Heart right ventricle (tissue), 16 donors: ENCODE measurements at regions of chr17 and their contacts with region 1.

Region 1: DNA sequence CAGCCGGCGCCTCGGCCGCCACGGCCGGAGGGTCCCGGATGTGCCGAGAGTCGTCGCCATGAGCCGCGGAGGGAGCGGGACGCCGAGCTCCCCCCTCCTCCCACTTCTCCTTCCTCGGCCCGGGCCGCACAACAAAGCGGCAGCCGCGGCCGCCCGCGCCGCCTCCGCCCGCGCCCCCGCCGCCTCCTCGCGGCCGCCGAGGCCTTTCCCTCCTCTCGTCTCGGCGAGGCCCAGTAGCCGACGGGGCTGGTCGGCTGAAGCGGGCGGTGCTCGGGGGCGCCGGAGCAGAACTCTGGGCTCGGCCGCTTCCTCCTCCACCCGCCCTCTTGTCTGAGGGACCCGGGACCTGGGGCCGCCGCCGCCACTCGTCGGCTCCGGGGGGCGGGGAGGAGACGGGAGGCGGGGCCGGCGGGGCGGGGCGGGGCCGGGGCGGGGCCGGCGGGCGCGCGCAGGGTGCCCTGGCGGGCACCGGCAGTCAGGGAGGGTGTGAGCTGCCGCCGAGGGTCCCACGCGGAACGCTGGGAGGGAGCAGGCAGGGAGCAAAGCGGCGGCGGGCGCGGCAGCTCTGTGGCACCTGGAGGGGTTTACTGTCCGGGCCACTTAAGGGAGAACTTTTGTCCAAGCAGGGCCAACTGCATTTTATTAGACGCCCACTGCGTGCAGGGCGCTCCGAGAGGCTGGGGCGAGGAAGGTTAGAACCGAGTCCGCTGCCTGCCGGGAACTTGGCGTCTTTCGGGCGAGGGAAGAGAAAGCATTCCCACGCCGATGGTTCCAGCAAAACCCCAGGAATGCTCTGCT is at the start of gene SMURF2:
- DNase-seq: peak; percentile 80 to 82
- ATAC-seq: peak; percentile 88 to 96 (median 92)
- H3K4me3 ChIP-seq: peak within 1 kb of the TSS; percentile 69 to 84 (median 78)
- H3K27ac ChIP-seq: peak within 1 kb of the TSS; percentile 83 to 98 (median 94)
- H3K4me1 ChIP-seq: peaks cover 0 to 42% (median 30%) of the 10 kb centered on the region in 9 donors
- H3K27me3 ChIP-seq: no peaks in the 10 kb centered on the region
- CTCF ChIP-seq: peak in 1 of 9 donors; percentile 24
- total RNA-seq, gene SMURF2: 10.9 to 15.5 (median 12.5) TPM

Region 2: DNA sequence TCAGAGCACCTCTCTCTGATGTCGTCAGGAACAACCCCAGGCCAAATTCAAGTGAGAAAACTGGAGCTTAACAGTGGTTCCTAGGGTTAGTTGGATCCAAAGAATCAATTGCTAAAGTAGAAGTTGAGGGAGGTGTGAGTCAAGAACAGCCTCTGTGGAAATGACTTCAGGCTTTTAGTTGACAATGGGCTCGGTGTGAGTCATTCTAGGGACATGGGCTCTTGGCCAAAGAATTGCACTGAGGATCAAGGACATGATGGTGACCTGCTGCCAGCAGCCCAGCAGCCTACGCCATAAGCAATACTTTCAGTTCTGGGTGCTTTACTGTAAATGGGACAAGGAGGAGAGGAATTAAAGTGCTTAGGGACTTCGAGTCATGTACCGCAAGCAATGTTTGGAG is 32.0 kb after region 1 on chr17:
- intact Hi-C with region 1: no loop called
- DNase-seq: peak; percentile 33 to 81
- ATAC-seq: peak; percentile 92 to 98 (median 96)
- H3K4me3 ChIP-seq: no peak overlapping the region
- H3K27ac ChIP-seq: peak overlapping the region in 7 of 10 donors; percentile 20 to 76 (median 58)
- H3K4me1 ChIP-seq: peaks cover 0 to 17% (median 5%) of the 10 kb centered on the region in 9 donors
- H3K27me3 ChIP-seq: no peaks in the 10 kb centered on the region
- CTCF ChIP-seq: no peak

Region 3: GRCh38 chr17:64723781-64724180 is 61.6 kb after region 1 on chr17:
- intact Hi-C with region 1: loop called in 1 of 10 experiments (anchors 5 kb)
- DNase-seq: no peak
- ATAC-seq: no peak
- H3K4me3 ChIP-seq: no peak overlapping the region
- H3K27ac ChIP-seq: peak overlapping the region in 9 of 10 donors; percentile 35 to 77 (median 66)
- H3K4me1 ChIP-seq: peaks cover 0 to 27% (median 12%) of the 10 kb centered on the region in 9 donors
- H3K27me3 ChIP-seq: no peaks in the 10 kb centered on the region
- CTCF ChIP-seq: no peak

Region 4: GRCh38 chr17:64736804-64737492 is 74.8 kb after region 1 on chr17:
- intact Hi-C with region 1: loop called in 6 of 10 experiments (anchors 5 to 10 kb)
- DNase-seq: no peak
- ATAC-seq: peak in 1 of 8 donors; percentile 14
- H3K4me3 ChIP-seq: no peak overlapping the region
- H3K27ac ChIP-seq: no peak overlapping the region
- H3K4me1 ChIP-seq: peaks cover 7 to 49% (median 27%) of the 10 kb centered on the region in 9 donors
- H3K27me3 ChIP-seq: no peaks in the 10 kb centered on the region
- CTCF ChIP-seq: peak; percentile 39 to 70 (median 58)